Endothelial cell of umbilical vein (primary cell): ENCODE measurements at regions of chr11 and their contacts with region 1.

Region 1: GRCh38 chr11:105156231-105156630 is 16.7 kb upstream of the CARD18 start:
- DNase-seq: peak; percentile 61
- H3K4me3 ChIP-seq: no peak overlapping the region
- H3K27ac ChIP-seq: no peak overlapping the region
- H3K4me1 ChIP-seq: peaks cover 10% of the 10 kb centered on the region
- H3K27me3 ChIP-seq: no peaks in the 10 kb centered on the region
- CTCF ChIP-seq: no peak
- POLR2A ChIP-seq: no peak

Region 2: GRCh38 chr11:105181100-105181499 is 24.9 kb after region 1 on chr11:
- CTCF ChIA-PET with region 1: interaction called, 3 read pairs
- POLR2A ChIA-PET with region 1: no interaction called
- dilution Hi-C with region 1: no loop called
- intact Hi-C with region 1: loop called (anchors 2 kb)
- DNase-seq: peak; percentile 83
- H3K4me3 ChIP-seq: no peak overlapping the region
- H3K27ac ChIP-seq: no peak overlapping the region
- H3K4me1 ChIP-seq: peaks cover 6% of the 10 kb centered on the region
- H3K27me3 ChIP-seq: no peaks in the 10 kb centered on the region
- CTCF ChIP-seq: no peak
- POLR2A ChIP-seq: no peak